Motor neuron (in vitro differentiated cells): ENCODE measurements at regions of chr2 and their contacts with region 1.

Region 1: GRCh38 chr2:41853427-41854216 is 194.2 kb upstream of the PKDCC start:
- ATAC-seq: peak in 5 of 8 experiments; percentile 16 to 92 (median 75)
- H3K4me3 ChIP-seq: no peak overlapping the region
- H3K27ac ChIP-seq: no peak overlapping the region
- H3K4me1 ChIP-seq: no peaks in the 10 kb centered on the region

Region 2: DNA sequence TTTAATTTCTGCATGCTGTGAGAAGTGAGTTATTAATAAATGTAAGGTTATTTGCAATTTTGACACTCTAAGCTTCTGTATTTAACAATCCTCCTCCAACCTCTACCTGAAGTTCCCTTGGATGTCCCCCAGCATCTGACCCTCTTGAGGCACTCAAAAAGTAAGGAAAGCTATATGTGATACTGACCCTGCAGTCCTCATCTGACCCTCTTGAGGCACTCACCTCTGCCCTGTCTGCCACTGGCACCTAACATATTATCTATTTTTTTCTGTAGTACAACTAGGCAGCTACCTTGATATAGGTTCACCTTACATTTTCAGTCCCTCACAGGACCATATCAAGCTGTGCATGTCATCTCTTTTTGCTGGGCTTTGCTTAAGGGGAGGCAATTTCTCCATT is 389.2 kb before region 1 on chr2:
- in situ Hi-C with region 1: no loop called
- ATAC-seq: no peak
- H3K4me3 ChIP-seq: no peak overlapping the region
- H3K27ac ChIP-seq: no peak overlapping the region
- H3K4me1 ChIP-seq: no peaks in the 10 kb centered on the region

Region 3: GRCh38 chr2:42095923-42096408 is 242.3 kb after region 1 on chr2:
- in situ Hi-C with region 1: loop called in 1 of 9 experiments (anchors 10 kb)
- ATAC-seq: peak; percentile 46 to 87 (median 66)
- H3K4me3 ChIP-seq: no peak overlapping the region
- H3K27ac ChIP-seq: no peak overlapping the region
- H3K4me1 ChIP-seq: peaks cover 0 to 6% of the 10 kb centered on the region in 2 donors